ENCODE measurements at regions of chr19 and their contacts with region 1.

Region 1: GRCh38 chr19:36436531-36436930 is 18.1 kb upstream of the ZFP82 start:
- DNase-seq: no peak
- H3K4me3 ChIP-seq: no peak overlapping the region
- H3K27ac ChIP-seq: no peak overlapping the region
- H3K4me1 ChIP-seq: no peaks in the 10 kb centered on the region
- H3K27me3 ChIP-seq: no peaks in the 10 kb centered on the region
- CTCF ChIP-seq: no peak
- POLR2A ChIP-seq: no peak

Region 2: DNA sequence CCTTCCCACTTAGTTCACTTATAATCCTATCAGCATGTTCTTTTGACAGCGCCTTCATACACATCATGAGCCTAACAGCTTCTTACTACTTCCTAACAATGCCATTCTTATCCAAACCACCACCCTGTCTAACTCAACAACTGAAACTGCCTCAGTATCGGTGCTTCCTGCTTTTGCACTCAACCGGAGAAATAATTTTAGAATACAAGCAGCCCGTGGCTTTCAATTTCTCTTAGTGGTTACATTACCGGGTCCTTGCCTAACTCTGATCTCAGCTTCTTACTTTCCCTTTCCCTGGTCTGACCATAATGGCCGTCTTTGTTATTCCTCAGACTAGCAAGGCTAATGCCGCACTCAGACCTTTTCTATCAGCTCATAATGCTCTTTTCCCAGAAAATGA is 35.1 kb before region 1 on chr19:
- intact Hi-C with region 1: loop called (anchors 2 kb)
- DNase-seq: no peak
- H3K4me3 ChIP-seq: no peak overlapping the region
- H3K27ac ChIP-seq: no peak overlapping the region
- H3K4me1 ChIP-seq: no peaks in the 10 kb centered on the region
- H3K27me3 ChIP-seq: no peaks in the 10 kb centered on the region
- CTCF ChIP-seq: no peak
- POLR2A ChIP-seq: no peak

Region 3: GRCh38 chr19:36456831-36457230 is 20.3 kb after region 1 on chr19:
- intact Hi-C with region 1: no loop called
- DNase-seq: no peak
- H3K4me3 ChIP-seq: no peak overlapping the region
- H3K27ac ChIP-seq: no peak overlapping the region
- H3K4me1 ChIP-seq: no peaks in the 10 kb centered on the region
- H3K27me3 ChIP-seq: no peaks in the 10 kb centered on the region
- CTCF ChIP-seq: no peak
- POLR2A ChIP-seq: no peak

Region 4: DNA sequence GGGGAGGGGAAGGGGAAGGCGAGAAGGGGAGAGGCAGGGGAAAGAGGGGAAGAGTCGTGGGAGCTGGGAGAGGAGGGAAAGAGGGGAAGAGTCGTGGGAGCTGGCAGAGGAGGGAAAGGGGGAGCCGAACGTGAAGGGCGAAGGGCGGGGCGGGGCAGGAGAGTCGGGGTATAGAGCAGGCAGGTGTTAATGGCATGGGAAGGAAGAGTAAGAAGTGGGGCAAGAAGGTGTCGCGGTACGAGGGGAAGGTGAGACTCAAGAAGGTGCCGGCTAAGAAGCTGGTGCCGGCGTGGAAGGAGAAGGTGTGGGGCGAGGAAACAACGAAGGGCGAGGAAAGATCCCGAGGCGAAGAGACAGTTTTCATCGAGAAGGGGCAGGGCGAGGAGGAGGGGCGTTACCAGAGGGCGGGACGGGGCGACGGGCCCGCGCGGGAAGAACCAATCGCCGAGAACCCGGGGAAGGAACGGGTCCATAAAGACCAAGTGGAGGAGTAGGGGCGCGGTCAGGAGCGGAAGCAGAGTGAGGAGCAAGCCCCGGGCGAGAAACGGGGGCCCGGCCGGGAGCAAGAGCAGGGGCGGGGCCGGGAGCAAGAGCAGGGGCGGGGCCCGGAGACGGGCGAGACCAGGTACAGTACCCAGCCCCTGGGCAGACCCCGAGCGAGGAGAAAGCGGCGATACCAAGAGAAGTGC is 1899.6 kb after region 1 on chr19:
- intact Hi-C with region 1: no loop called
- DNase-seq: peak; percentile 94 to 95
- H3K4me3 ChIP-seq: peak overlapping the region; percentile 76 to 78 (median 76)
- H3K27ac ChIP-seq: peak overlapping the region; percentile 97 to 100
- H3K4me1 ChIP-seq: no peaks in the 10 kb centered on the region
- H3K27me3 ChIP-seq: no peaks in the 10 kb centered on the region
- CTCF ChIP-seq: no peak
- POLR2A ChIP-seq: peak; percentile 40

Measured in breast epithelium (tissue), 4 donors.